PC-9 (cell line): ENCODE measurements at regions of chr6 and their contacts with region 1.

Region 1: GRCh38 chr6:106085984-106086813 is at the start of gene PRDM1:
- DNase-seq: peak; percentile 89 to 94
- H3K4me3 ChIP-seq: peak within 1 kb of the TSS; percentile 78
- H3K27ac ChIP-seq: peak within 1 kb of the TSS; percentile 87
- H3K4me1 ChIP-seq: peaks cover 43% of the 10 kb centered on the region
- H3K27me3 ChIP-seq: no peaks in the 10 kb centered on the region
- CTCF ChIP-seq: peak; percentile 47
- total RNA-seq, gene PRDM1: 1.4 and 2.6 TPM in 2 replicates

Region 2: GRCh38 chr6:105484238-105485161 is 601.7 kb before region 1 on chr6:
- CTCF ChIA-PET with region 1: no interaction called
- POLR2A ChIA-PET with region 1: no interaction called
- intact Hi-C with region 1: loop called (anchors 5 kb)
- DNase-seq: peak in 1 of 2 experiments; percentile 53
- H3K4me3 ChIP-seq: no peak overlapping the region
- H3K27ac ChIP-seq: no peak overlapping the region
- H3K4me1 ChIP-seq: peaks cover 13% of the 10 kb centered on the region
- H3K27me3 ChIP-seq: no peaks in the 10 kb centered on the region
- CTCF ChIP-seq: peak; percentile 97

Region 3: GRCh38 chr6:105793130-105793529 is 293.1 kb before region 1 on chr6:
- CTCF ChIA-PET with region 1: no interaction called
- POLR2A ChIA-PET with region 1: no interaction called
- intact Hi-C with region 1: loop called (anchors 5 kb)
- DNase-seq: peak; percentile 12 to 49
- H3K4me3 ChIP-seq: no peak overlapping the region
- H3K27ac ChIP-seq: peak overlapping the region; percentile 84
- H3K4me1 ChIP-seq: peaks cover 51% of the 10 kb centered on the region
- H3K27me3 ChIP-seq: no peaks in the 10 kb centered on the region
- CTCF ChIP-seq: no peak

Region 4: DNA sequence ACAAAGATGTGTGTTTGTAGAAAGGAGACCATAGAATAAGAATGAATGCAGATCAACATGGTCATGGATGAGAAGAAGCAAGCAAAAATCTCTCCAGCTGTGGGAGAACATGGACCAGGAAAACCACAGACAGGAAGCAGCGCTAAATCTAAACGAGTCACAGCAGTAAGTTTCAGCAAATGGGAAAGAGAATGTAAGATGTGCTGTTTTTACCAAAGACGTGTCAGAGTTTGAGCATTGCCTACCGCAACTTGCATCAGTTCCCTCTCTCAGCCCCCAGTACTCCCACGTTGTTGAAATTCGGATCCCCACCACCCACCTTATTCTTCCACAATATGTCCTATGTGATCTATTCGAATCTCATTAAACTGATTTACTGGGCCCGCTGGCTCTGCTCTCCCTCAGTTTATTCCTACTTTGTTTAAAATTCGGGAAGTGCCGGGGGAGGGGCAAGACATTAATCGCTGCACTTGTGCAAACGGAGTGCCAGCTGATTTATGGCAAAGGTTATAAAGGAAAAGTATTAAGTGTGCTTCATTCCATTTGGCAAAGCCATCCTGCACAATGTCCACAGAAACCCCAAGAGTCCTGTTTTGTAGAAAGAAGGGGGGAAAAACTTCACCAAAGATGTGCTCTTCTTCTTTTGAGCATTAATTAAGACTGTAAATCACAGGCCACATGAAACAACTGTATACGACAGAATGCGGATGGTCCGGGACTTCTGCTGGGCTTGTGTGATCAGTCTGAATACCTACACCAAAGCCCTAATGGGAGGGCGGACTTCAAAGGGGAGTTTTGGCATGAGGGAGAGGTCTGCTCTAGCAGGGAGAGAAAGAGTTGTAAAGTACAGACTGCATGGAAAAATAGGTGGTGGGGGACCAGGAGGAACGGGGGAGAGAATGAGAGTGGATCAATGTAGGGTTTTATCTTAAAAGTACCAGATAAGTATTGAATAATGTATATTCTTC is 59.2 kb before region 1 on chr6:
- CTCF ChIA-PET with region 1: no interaction called
- POLR2A ChIA-PET with region 1: interaction called, 16 read pairs
- intact Hi-C with region 1: no loop called
- DNase-seq: no peak
- H3K4me3 ChIP-seq: no peak overlapping the region
- H3K27ac ChIP-seq: no peak overlapping the region
- H3K4me1 ChIP-seq: no peaks in the 10 kb centered on the region
- H3K27me3 ChIP-seq: no peaks in the 10 kb centered on the region
- CTCF ChIP-seq: no peak

Region 5: DNA sequence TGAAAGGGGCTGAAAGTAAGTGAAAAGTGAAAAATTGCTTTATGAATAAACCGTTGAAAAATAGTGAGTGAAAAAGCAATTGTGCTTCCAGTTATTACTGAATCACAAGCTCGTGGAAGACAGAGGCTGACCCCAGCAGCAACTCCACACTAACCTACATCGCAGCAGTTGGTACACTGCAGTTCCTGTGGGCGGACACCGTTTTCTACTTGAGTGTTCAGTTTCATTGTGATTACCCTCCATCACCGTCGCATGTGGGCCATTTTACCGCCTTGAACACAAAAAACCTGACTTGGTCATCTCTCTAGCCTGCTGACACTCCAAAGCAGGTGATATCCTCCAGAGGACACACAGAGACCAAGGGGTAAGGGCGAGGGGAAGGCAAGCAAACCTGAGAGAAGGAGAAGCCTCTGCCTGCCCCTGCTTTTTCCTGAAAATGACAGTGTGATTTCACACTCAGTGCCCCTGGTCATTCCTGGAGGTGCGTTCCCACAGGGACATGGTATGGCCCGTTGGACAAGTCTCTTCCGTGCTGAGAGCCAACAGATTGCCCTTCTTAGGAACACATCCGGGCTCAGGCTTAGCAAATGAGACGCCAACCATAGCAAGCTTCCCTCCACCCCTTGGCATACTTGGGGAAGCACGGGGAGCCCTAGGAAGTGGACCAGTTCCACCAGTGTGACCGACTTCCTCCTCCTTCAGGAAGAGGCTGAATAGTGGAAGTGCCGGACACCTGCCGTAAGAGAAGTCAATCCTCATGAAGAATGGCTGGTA is 28.5 kb after region 1 on chr6:
- CTCF ChIA-PET with region 1: interaction called, 3 read pairs
- POLR2A ChIA-PET with region 1: interaction called, 5 read pairs
- intact Hi-C with region 1: loop called (anchors 1 kb)
- DNase-seq: no peak
- H3K4me3 ChIP-seq: no peak overlapping the region
- H3K27ac ChIP-seq: no peak overlapping the region
- H3K4me1 ChIP-seq: peaks cover 13% of the 10 kb centered on the region
- H3K27me3 ChIP-seq: no peaks in the 10 kb centered on the region
- CTCF ChIP-seq: no peak

Region 6: GRCh38 chr6:106223300-106223930 is 137.2 kb after region 1 on chr6:
- CTCF ChIA-PET with region 1: interaction called, 11 read pairs
- POLR2A ChIA-PET with region 1: interaction called, 7 read pairs
- intact Hi-C with region 1: loop called (anchors 1 kb)
- DNase-seq: peak; percentile 49 to 63
- H3K4me3 ChIP-seq: no peak overlapping the region
- H3K27ac ChIP-seq: 0 out of 2 replicates have a peak overlapping the region, but pooled peaks have one; percentile 9
- H3K4me1 ChIP-seq: 0 out of 2 replicates have a peak, but pooled peaks cover 3% of the 10 kb centered on the region
- H3K27me3 ChIP-seq: no peaks in the 10 kb centered on the region
- CTCF ChIP-seq: peak; percentile 93